Posterior cingulate gyrus (tissue), 11 donors: ENCODE measurements at regions of chr22 and their contacts with region 1.

Region 1: DNA sequence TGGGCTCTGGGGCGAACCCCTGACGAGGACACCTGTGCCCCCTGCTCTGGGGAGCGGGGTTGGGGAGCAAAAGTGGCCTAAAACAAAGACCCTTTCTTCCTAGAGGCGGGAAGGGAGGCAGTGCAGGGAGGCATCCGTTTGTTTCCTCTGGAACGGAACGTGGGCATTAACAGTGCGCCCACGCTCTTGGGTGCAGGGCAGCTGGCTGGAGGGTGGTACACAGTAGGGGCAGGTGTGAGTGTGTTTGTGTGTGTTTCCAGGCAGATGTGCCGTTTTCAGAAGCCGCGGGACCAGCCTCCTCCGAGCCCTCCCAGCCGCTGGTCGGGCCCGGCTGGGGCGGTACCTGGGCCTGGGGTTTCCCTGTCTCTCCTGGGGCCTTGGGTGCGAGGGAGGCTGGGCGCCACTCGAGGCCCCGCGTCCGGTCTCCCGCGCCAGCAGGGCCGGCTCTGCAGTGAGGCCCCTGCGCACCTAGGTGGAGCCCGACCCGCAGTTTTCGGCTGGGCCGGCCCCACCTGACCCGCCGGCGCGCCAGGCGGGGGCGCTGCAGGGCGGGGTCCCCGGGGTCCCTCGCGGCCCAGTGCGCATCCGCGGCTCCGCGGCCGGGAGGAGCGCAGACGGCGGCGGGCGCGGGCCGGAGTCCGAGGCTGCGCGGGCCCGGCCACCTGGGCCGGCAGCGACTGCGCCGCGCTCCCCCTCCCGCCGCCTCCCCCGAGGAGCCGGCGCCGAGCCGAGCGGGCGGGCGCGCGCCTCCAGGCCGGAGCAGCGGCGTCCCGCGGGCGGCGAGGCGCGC is 1252.7 kb downstream of the BRD1 start:
- DNase-seq: peak; percentile 38 to 95 (median 62)

Region 2: DNA sequence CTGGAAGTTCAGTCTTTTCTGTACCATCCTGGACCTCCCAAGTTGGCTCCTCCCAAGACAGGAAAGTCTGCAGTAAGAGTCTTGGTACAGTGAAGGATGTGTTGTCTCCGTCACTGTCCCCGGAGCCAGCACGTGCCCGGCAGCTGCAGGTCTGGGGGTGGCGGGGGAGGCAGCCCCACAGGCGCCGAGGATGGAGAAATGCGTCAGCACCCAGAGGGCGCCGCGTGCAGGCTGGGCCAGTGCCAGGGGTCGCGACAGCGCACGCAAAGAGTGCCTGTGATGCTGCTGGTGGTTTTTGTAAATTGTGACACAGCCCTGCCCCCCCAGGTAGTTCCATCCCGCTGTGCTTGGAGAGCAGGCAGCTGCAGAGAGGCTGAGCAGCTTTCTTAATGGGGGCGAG is 52.2 kb after region 1 on chr22:
- intact Hi-C with region 1: loop called (anchors 2 kb)
- DNase-seq: peak in 7 of 10 donors; percentile 37 to 93 (median 57)

Region 3: GRCh38 chr22:48700566-48701295 is 125.8 kb after region 1 on chr22:
- intact Hi-C with region 1: loop called (anchors 2 kb)
- DNase-seq: peak in 8 of 10 donors; percentile 25 to 89 (median 52)

Region 4: DNA sequence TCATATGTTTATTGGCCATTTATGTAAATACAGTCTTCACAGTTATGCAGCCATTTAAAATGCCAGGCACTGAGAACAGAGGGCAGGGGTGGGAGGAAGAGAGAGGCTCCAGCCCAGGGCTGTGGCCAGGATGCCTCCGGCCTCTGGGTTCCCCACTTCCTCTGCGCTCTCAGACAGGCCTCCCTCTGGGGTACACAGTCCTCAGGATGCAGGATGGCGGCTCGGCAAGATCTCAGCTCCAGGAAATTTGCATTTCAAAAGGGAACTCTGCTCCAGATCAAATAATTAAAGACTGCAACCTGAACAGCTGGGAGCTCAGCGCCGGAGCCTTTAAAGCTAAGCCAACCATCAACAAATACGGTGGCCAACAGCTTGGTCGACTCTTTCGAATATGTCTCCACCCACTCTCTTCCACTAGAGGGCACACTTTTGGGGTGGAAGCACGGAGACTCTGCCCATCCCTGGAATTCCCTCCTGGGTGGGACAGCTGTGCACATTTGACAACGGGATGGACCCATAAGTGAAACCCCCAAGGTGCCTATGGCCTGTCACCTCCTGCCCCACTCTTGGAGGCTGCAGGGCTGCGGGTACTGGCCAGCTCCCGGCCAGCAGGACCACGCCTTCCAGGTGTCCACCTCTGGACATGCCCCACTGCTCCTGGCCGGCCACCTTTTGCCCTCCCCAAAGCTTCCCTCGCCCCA is 208.0 kb after region 1 on chr22:
- intact Hi-C with region 1: loop called (anchors 5 kb)
- DNase-seq: peak in 2 of 10 donors; percentile 41 to 65

Region 5: DNA sequence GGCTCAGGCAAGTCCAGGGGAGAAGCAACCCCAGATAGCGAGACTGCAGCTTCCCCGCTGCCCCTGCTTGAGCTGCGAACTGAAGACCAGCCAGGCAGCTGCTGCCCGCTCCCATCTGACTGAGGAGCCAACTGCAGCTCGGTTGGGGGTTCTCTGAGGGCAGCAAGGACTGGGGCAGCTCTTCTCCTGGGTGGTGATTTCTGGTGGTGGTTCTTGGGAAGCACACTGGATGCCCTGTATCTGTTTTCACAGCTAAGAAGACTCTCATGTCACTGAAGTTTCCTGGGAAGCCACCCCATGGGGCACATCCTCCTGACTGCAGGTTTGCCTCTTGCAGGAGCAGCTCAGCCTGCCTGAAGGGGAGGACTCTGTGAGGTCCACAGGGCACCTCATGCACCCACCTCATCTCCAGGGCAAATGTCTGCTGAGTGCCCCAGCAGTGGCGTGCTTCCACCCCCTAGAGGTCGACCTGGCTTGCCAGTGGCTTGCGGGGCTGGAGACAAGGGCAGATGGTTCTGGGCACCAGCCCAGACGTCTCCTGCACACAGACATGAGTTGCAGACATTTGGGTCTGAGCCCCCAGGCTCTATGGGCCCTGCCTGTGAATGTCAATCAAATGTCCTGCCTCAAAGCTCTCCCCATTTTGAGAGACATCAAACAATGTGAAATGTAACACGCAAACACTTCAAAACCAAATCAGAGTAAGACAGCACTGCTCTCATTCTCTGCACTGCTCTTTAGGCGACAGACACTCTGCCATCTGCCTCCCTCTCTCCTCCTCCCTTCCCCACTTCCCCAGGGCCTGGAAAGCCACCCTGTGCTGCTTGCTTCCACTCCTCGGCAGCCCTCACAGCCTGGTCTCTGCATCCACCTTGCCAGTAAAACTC is 451.8 kb after region 1 on chr22:
- intact Hi-C with region 1: loop called (anchors 5 kb)
- DNase-seq: peak in 8 of 10 donors; percentile 46 to 95 (median 68)

Region 6: DNA sequence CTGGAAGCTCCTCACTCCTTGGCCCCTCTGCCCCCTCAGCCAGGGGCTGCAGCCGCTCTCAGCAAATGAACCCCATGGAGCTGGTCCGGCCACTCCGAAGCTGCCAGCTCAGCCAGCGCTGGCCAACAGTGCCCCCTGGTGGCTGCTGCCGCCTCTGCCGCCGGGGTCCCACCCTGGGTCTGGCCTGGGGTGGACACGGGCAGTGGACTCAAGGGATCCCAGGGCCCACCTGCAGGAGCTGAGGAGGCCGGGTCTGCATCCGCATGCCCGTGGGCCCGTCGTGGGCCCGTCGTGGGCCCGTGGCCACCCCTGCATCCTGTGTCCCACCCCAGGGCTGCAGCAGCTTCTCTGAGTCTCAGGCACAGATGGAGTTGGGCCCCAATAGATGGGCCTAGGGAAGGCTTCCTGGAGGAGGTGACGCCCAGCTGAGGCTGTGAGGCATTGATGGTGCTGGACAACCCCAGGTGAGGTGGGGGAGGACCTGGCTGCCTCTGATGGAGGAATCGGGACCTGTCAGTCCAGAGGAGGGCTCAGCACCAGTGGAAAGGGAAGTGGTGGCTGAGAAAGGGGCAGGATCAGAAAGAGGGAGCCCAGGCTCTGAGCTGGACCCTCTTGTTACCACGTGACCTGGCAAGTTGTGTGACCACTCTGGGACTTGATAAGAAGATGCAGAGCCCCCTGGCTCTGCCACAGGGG is 730.4 kb after region 1 on chr22:
- intact Hi-C with region 1: loop called (anchors 1 kb)
- DNase-seq: peak; percentile 54 to 97 (median 86)

Region 7: DNA sequence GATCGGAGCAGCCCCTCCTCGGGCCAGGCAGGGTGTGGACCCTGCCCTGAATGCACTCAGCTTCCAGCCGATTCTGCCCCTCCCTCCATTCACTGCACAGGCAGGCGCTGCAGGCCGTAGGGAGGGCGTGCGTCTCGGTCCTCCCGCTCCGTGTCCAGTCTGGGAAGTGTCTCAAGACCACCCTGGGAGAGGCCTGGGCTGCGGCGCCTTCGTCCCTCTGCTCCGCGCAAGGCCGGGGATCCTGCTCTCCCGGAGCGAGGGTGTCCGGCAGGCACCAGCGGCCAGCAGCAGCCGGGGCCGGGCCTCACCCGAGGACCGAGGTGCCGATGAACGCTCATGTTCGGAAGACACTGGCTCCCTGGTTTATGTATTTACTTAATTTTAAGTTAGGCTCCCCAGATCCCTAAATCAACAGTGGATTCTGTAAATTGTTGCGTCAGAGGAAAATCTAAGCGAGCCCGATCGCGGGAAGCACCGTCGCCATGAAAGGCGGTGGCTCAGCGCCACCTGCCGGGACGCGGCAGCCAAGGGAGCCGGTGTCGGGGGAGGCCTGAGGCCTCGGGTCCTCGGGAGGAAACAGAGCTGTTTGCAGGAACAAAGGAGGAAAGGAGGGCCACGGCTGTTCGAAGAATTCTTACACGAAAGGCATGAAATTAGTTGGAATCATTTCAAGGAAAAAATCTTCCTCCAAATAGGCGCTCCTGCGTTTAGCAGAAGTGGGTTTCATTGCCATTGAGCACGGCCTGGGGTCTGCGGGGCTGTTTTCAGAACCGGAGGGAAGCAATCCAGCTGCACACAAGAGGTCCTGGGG is 1057.4 kb after region 1 on chr22:
- intact Hi-C with region 1: loop called (anchors 5 kb)
- DNase-seq: peak; percentile 54 to 97 (median 76)